Body of pancreas (tissue), 4 donors: ENCODE measurements at regions of chr4 and their contacts with region 1.

Region 1: GRCh38 chr4:83074086-83074704 is 39.2 kb downstream of the COPS4 start:
- DNase-seq: peak; percentile 18 to 70 (median 31)
- ATAC-seq: peak; percentile 40
- H3K4me3 ChIP-seq: no peak overlapping the region
- H3K27ac ChIP-seq: no peak overlapping the region
- H3K4me1 ChIP-seq: no peaks in the 10 kb centered on the region
- H3K27me3 ChIP-seq: no peaks in the 10 kb centered on the region
- CTCF ChIP-seq: peak; percentile 19 to 72 (median 63)
- POLR2A ChIP-seq: no peak

Region 2: GRCh38 chr4:83252782-83253405 is 178.7 kb after region 1 on chr4:
- intact Hi-C with region 1: loop called (anchors 10 kb)
- DNase-seq: peak; percentile 40 to 82 (median 69)
- ATAC-seq: peak; percentile 59
- H3K4me3 ChIP-seq: no peak overlapping the region
- H3K27ac ChIP-seq: no peak overlapping the region
- H3K4me1 ChIP-seq: no peaks in the 10 kb centered on the region
- H3K27me3 ChIP-seq: no peaks in the 10 kb centered on the region
- CTCF ChIP-seq: peak; percentile 8 to 57 (median 38)
- POLR2A ChIP-seq: no peak